Activated naive CD4-positive, alpha-beta T cell treated with anti-CD3 and anti-CD28 coated beads, Interleukin-2, amount 10 ng/mL, durations not matched to agents 7 days and 5 days (primary cell): ENCODE measurements at regions of chr11 and their contacts with region 1.

Region 1: DNA sequence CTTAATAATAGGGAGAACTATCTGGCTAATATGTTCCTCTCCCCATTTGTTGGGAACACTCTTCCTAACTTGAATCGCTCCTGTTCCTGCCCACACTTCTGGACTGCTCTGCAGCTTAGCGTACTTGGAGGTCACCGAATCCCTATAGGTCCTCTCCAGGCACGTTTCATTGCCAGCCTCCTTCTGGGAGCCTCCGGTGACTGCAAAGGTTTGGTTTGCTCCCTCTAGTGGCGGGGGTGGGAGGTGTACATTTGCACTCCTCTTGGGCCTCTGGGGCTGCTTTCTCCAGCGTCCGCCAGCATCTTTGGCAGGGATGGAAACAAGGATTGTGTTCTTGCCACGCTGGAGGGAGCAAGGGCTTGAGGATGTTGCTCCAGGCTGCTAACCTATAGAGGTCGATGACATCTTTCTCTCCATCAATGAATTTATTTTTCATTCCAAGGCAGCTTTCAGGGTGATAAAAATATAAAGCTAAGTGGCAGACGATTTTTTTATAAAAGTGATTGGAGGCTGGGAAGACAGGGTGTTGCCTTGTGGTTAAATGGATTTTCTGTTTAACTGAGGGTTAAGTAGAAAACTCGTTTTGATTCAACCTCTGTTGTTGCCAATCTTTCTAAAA is 48.7 kb downstream of the TSPAN18 start:
- DNase-seq: peak; percentile 75
- H3K4me3 Mint-ChIP-seq: no peak overlapping the region
- H3K27ac Mint-ChIP-seq: no peak overlapping the region
- H3K4me1 Mint-ChIP-seq: peaks cover 6% of the 10 kb centered on the region
- H3K27me3 Mint-ChIP-seq: peaks cover 4% of the 10 kb centered on the region

Region 2: GRCh38 chr11:44621140-44621681 is 154.3 kb before region 1 on chr11:
- CTCF ChIA-PET with region 1: interaction called, 38 read pairs
- DNase-seq: peak; percentile 70
- H3K4me3 Mint-ChIP-seq: no peak overlapping the region
- H3K27ac Mint-ChIP-seq: no peak overlapping the region
- H3K4me1 Mint-ChIP-seq: peaks cover 34% of the 10 kb centered on the region
- H3K27me3 Mint-ChIP-seq: no peaks in the 10 kb centered on the region

Region 3: DNA sequence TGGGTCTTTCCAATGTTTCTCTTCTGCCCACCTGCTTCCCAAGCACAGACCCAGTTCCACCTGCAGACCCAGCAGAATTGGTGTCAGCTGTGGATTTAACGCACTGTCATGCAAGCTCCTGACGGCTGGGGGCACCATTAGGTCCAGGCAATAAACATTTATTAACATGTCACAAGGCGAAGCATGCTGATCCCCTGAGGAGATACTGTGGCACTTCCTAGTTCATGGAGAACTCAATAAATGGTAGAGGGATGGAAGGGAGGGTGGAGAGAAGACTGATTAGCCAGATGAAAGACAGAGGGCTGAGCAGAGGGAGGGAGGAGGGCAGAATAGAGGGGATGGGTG is 117.0 kb before region 1 on chr11:
- CTCF ChIA-PET with region 1: interaction called, 14 read pairs
- DNase-seq: peak; percentile 68
- H3K4me3 Mint-ChIP-seq: no peak overlapping the region
- H3K27ac Mint-ChIP-seq: no peak overlapping the region
- H3K4me1 Mint-ChIP-seq: peaks cover 34% of the 10 kb centered on the region
- H3K27me3 Mint-ChIP-seq: peaks cover 34% of the 10 kb centered on the region

Region 4: GRCh38 chr11:44795803-44796535 is 20.5 kb after region 1 on chr11:
- CTCF ChIA-PET with region 1: interaction called, 11 read pairs
- DNase-seq: no peak
- H3K4me3 Mint-ChIP-seq: no peak overlapping the region
- H3K27ac Mint-ChIP-seq: no peak overlapping the region
- H3K4me1 Mint-ChIP-seq: peaks cover 3% of the 10 kb centered on the region
- H3K27me3 Mint-ChIP-seq: no peaks in the 10 kb centered on the region